ENCODE measurements at regions of chr14 and their contacts with region 1.

Region 1: GRCh38 chr14:68792976-68793733 is at the start of gene ZFP36L1:
- DNase-seq: peak; percentile 96
- ATAC-seq: peak; percentile 68
- total RNA-seq, gene ZFP36L1: 45.5 TPM

Region 2: GRCh38 chr14:68248481-68249255 is 544.5 kb before region 1 on chr14:
- intact Hi-C with region 1: loop called (anchors 5 kb)
- DNase-seq: peak; percentile 44
- ATAC-seq: peak; percentile 76

Region 3: GRCh38 chr14:68520637-68521556 is 272.3 kb before region 1 on chr14:
- intact Hi-C with region 1: loop called (anchors 5 kb)
- DNase-seq: no peak
- ATAC-seq: no peak

Region 4: GRCh38 chr14:68685419-68686204 is 107.5 kb before region 1 on chr14:
- intact Hi-C with region 1: loop called (anchors 10 kb)
- DNase-seq: no peak
- ATAC-seq: no peak

Region 5: GRCh38 chr14:68719634-68720384 is 73.3 kb before region 1 on chr14:
- intact Hi-C with region 1: no loop called
- DNase-seq: no peak
- ATAC-seq: no peak

Region 6: GRCh38 chr14:68734231-68734775 is 58.9 kb before region 1 on chr14:
- intact Hi-C with region 1: loop called (anchors 5 kb)
- DNase-seq: no peak
- ATAC-seq: no peak